ENCODE measurements at regions of chr17 and their contacts with region 1.

Region 1: GRCh38 chr17:65100316-65101140 is 36.6 kb upstream of the RGS9 start:
- DNase-seq: peak; percentile 95

Region 2: DNA sequence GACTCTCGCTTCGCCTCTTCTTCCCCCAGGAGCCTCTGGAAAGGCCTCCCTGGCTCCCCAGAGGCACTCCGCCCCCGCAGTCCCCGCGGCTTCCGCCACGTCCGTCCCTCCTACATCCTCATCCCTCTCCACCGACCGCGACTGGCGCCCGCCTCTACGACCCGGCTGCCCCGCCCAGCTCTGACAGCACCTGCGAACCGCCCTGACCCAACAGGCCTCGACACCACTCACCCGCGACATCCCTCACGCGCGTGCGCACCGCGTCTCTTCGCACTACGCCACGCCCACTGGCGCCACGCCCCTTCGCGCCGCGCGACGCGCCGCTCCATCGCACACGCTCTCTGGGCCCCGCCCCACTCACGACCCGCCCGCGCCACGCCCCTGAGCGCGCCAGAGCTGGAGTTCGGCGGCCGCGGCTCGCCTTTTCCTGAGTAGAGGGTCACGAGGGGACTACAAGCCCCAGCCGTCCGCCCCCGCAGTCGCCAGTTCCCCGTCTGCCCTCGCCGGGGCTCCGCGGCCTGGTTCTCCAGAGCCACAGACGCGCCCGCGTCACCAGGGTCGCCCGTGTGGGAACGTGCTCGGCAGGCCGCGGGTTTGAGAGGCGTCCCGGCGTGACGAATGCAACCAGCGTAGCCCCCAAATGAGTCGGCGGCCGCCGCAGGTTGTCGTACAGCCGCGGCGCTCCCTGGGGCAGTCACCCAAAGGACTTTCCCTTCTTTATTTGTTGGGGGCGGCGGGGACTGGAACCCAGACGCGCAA is 125.0 kb before region 1 on chr17:
- intact Hi-C with region 1: loop called in 1 of 2 experiments (anchors 10 kb)
- DNase-seq: peak; percentile 99

Region 3: DNA sequence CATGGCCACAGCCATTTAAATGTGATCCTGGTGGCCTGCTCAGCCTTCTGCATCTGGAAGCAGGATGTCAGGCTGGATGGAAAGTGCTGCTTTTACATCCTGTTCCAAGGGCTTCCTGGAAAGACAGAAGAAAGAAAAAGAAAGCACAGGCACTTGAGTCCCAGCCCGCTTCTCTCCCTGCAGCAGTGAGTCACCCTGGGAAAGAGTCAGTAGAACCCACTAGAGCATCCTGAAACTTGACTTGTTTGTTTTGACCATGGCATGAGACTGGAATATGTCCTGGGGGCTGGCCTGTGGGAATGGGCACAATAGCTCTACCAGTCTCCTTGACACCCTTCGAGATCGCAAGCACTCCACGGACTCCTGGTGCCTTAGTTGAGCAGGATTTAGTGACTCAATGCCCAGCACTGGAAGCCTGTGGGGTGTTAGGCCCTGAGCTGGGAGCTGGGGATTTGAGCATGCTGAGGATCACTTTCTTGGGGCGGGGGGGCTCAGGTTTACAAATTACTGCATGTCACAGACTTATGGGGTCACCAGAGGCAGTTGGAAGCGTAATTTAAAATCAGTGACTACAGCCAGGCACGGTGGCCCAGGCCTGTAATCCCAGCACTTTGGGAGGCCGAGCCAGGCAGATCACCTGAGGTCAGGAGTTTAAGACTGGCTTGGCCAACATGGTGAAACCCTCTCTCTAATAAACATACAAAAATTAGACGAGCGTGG is 21.9 kb before region 1 on chr17:
- intact Hi-C with region 1: no loop called
- DNase-seq: no peak

Region 4: DNA sequence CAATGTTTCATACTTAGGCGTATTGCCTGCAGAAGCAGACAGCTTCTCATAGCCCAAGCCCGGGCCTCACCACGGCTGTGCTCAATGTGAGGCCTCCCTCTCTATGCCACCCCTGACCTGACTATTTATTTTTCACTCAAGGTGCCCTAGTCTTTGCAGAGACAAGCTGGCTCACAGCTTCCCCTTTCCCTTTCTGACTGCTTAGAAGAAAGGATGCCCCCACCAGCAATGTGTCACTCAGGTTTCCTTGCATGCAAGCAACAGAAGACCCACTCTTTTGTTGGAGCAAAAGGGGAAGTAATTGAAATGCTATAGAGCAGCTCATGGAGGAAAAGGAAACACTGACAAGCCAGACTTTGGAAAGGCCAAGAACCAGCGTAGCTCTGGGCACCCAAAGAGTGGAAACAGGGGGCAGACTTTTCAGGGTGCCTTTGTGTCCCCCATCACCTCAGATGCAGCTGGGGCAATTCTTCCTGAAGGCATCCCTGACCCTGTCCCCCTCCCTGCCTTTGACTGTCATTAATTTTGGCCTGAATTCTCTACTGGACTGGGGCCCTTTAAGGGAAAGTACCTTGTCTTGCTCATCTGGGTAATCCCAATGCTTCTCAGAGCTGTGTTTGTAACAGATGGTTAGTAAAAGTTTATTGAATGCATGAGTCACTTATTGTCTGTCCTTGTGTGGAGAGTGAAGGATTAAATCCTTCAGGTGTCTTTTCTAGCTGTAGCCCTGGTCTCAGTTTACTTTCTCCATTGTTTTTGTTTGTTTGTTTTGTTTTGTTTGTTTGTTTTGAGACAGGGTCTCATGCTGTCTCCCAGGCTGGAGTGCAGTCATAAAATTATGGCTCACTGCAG is 54.5 kb after region 1 on chr17:
- intact Hi-C with region 1: no loop called
- DNase-seq: no peak

Region 5: GRCh38 chr17:65181237-65182061 is 80.9 kb after region 1 on chr17:
- intact Hi-C with region 1: loop called in 1 of 2 experiments (anchors 10 kb)
- DNase-seq: no peak